ENCODE measurements at regions of chr1 and their contacts with region 1.

Region 1: GRCh38 chr1:66725885-66726665 is 26.2 kb upstream of the DYNLT5 start:
- DNase-seq: peak in 1 of 2 donors; percentile 68
- ATAC-seq: peak; percentile 52 to 90 (median 73)
- H3K4me3 ChIP-seq: no peak overlapping the region
- H3K27ac ChIP-seq: no peak overlapping the region
- H3K4me1 ChIP-seq: peaks cover 0 to 22% (median 8%) of the 10 kb centered on the region in 9 donors
- H3K27me3 ChIP-seq: no peaks in the 10 kb centered on the region
- CTCF ChIP-seq: peak; percentile 94 to 99 (median 96)

Region 2: GRCh38 chr1:65958561-65959350 is 767.3 kb before region 1 on chr1:
- intact Hi-C with region 1: loop called in 1 of 10 experiments (anchors 10 kb)
- DNase-seq: no peak
- ATAC-seq: peak in 3 of 8 donors; percentile 29 to 46 (median 45)
- H3K4me3 ChIP-seq: no peak overlapping the region
- H3K27ac ChIP-seq: no peak overlapping the region
- H3K4me1 ChIP-seq: peaks cover 0 to 8% (median 0%) of the 10 kb centered on the region in 9 donors
- H3K27me3 ChIP-seq: peaks cover 0 to 5% (median 0%) of the 10 kb centered on the region in 7 donors
- CTCF ChIP-seq: peak; percentile 62 to 89 (median 72)

Region 3: DNA sequence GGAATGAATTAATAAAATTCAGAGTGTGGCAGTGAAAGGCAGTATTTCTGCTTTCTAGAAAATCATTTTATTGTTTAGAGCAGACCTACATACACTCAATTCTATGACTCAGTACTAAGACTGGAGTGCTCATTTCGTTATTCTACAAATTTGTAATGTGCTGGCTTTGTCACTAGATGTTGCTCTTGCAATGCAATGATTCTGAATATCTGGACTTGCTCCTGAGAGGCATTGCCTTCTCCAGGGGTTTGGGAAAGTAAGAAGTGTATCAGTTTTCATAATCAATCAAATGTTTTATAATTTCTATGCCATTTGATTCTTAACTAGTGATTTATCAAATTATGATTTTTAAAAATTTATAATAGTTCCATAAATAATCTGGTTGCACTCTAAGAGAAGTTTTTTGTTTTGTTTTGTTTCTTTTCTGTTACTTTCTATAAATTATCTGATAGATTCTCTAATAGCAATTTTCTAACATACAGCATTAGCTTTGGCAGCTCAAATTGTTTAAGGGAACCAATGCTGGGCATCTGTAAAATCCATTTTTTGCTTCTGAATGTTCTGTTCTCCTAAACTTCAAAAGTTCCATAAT is 472.6 kb before region 1 on chr1:
- intact Hi-C with region 1: loop called in 7 of 10 experiments (anchors 5 to 10 kb)
- DNase-seq: peak in 1 of 2 donors; percentile 45
- ATAC-seq: peak; percentile 67 to 96 (median 92)
- H3K4me3 ChIP-seq: no peak overlapping the region
- H3K27ac ChIP-seq: no peak overlapping the region
- H3K4me1 ChIP-seq: peaks cover 0 to 43% (median 6%) of the 10 kb centered on the region in 9 donors
- H3K27me3 ChIP-seq: no peaks in the 10 kb centered on the region
- CTCF ChIP-seq: peak; percentile 66 to 92 (median 85)

Region 4: GRCh38 chr1:66452162-66452561 is 273.9 kb before region 1 on chr1:
- intact Hi-C with region 1: loop called in 7 of 10 experiments (anchors 5 to 10 kb)
- DNase-seq: no peak
- ATAC-seq: no peak
- H3K4me3 ChIP-seq: no peak overlapping the region
- H3K27ac ChIP-seq: peak overlapping the region in 1 of 10 donors; percentile 59
- H3K4me1 ChIP-seq: peaks cover 3 to 25% (median 15%) of the 10 kb centered on the region in 9 donors
- H3K27me3 ChIP-seq: no peaks in the 10 kb centered on the region
- CTCF ChIP-seq: peak in 3 of 9 donors; percentile 7 to 22 (median 17)

Region 5: GRCh38 chr1:66503841-66504470 is 222.1 kb before region 1 on chr1:
- intact Hi-C with region 1: loop called in 3 of 10 experiments (anchors 10 kb)
- DNase-seq: peak in 1 of 2 donors; percentile 64
- ATAC-seq: peak; percentile 64 to 93 (median 78)
- H3K4me3 ChIP-seq: no peak overlapping the region
- H3K27ac ChIP-seq: peak overlapping the region in 1 of 10 donors; percentile 8
- H3K4me1 ChIP-seq: peaks cover 0 to 10% (median 0%) of the 10 kb centered on the region in 9 donors
- H3K27me3 ChIP-seq: no peaks in the 10 kb centered on the region
- CTCF ChIP-seq: peak; percentile 25 to 80 (median 71)

Region 6: DNA sequence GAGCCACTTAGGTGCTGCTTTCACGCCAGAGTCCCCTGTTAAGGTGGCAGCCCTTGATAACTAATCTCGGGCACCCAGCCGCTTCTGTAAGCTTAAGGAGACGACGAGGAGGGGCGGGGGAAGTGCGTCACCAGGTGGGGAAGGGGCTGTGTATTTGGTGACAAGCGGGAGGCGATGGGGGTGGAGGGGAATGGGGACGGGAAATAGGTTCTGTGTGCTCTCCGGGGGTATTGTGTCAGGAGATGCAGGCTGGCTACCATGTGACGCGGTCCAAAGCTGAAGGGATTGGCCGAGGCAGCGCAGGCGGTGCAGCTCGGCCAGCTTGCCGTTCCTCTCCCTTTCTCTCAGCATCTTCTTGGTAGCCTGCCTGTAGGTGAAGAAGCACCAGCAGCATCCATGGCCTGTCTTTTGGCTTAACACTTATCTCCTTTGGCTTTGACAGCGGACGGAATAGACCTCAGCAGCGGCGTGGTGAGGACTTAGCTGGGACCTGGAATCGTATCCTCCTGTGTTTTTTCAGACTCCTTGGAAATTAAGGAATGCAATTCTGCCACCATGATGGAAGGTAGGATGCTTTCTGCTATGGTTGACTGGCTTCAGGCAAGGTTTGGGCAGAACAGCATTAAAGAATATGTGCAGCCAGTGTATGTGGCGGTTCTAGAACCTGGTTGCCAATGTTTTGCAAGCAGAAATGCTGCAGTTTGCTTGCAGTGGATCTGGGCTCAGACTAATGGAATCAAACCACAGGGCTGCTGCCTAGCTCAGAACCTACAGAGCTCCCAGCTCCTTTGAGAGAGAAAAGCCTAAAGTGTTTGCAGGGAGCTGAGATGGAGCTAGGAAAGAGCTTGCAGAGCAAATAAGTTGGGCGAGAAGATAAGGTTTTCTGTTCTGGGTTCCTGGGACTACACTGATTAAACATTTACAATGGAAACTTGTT is 192.0 kb before region 1 on chr1 and contains the start of gene SGIP1:
- intact Hi-C with region 1: loop called in 4 of 10 experiments (anchors 10 kb)
- DNase-seq: peak; percentile 55 to 80
- ATAC-seq: peak; percentile 87 to 96 (median 92)
- H3K4me3 ChIP-seq: peak within 1 kb of the TSS; percentile 7 to 62 (median 52)
- H3K27ac ChIP-seq: peak within 1 kb of the TSS; percentile 33 to 92 (median 76)
- H3K4me1 ChIP-seq: peaks cover 0 to 54% (median 11%) of the 10 kb centered on the region in 9 donors
- H3K27me3 ChIP-seq: peaks cover 0 to 24% (median 0%) of the 10 kb centered on the region in 7 donors
- CTCF ChIP-seq: no peak
- total RNA-seq, gene SGIP1: 1.6 to 19.6 (median 4.9) TPM

Region 7: DNA sequence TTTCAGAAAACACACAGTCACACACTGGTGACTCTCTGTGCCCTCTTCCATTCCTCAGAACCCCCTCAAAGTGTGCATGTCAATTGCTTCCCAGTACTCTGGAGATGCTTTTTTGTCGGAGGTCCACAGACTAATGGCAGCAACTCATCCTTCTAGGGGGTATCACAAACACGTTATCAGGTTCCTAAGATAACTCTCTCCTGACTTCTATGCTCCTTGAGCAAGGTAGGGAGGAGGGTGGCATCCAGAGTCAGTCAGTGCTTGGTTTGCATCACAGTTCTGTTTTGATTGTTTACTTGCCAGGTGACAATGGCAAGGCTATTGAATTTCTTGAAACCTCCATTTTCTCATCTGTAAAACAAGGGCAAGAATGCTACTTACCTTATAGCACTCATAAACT is 13.2 kb before region 1 on chr1:
- intact Hi-C with region 1: loop called in 1 of 10 experiments (anchors 1 kb)
- DNase-seq: no peak
- ATAC-seq: no peak
- H3K4me3 ChIP-seq: no peak overlapping the region
- H3K27ac ChIP-seq: no peak overlapping the region
- H3K4me1 ChIP-seq: no peaks in the 10 kb centered on the region
- H3K27me3 ChIP-seq: no peaks in the 10 kb centered on the region
- CTCF ChIP-seq: no peak

Measured in heart right ventricle (tissue), 16 donors.